IMR-90 (cell line): ENCODE measurements at regions of chr2 and their contacts with region 1.

Region 1: GRCh38 chr2:132400169-132400900 is 16.3 kb upstream of the GPR39 start:
- DNase-seq: peak; percentile 71
- ATAC-seq: peak; percentile 59
- H3K4me3 ChIP-seq: no peak overlapping the region
- H3K27ac ChIP-seq: no peak overlapping the region
- H3K4me1 ChIP-seq: no peaks in the 10 kb centered on the region
- H3K27me3 ChIP-seq: peaks cover 9% of the 10 kb centered on the region
- CTCF ChIP-seq: 0 out of 2 replicates have a peak, but pooled peaks have one; percentile 18
- POLR2A ChIP-seq: no peak
- RAD21 ChIP-seq: no peak

Region 2: DNA sequence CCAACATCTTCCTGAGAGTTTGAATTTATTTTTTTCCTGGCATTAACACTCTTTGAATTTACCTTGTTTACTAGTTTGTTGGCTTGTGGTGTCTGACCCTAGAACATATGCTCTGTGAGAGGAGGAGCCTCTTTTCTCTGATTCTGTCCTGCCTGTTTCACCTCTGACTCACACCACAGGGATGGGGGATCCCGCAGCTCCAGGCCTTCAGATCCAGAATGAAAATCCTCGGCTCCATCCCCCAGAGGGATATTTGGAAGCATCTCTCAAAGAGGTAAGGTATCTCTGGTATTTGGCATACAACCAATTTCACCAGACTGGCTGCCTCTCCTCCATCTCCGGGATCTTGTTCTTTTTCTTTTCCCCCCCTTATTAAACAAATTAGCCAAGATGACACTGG is 121.0 kb after region 1 on chr2:
- CTCF ChIA-PET with region 1: no interaction called
- POLR2A ChIA-PET with region 1: no interaction called
- dilution Hi-C with region 1: no loop called
- in situ Hi-C with region 1: no loop called
- intact Hi-C with region 1: no loop called
- DNase-seq: peak; percentile 28
- ATAC-seq: peak; percentile 56
- H3K4me3 ChIP-seq: no peak overlapping the region
- H3K27ac ChIP-seq: no peak overlapping the region
- H3K4me1 ChIP-seq: no peaks in the 10 kb centered on the region; the same call in 1 of the 2 replicates
- H3K27me3 ChIP-seq: peaks cover 1% of the 10 kb centered on the region; the same call in 1 of the 2 replicates
- CTCF ChIP-seq: no peak
- POLR2A ChIP-seq: no peak
- RAD21 ChIP-seq: no peak

Region 3: GRCh38 chr2:132623096-132623839 is 222.9 kb after region 1 on chr2:
- CTCF ChIA-PET with region 1: no interaction called
- POLR2A ChIA-PET with region 1: no interaction called
- dilution Hi-C with region 1: no loop called
- in situ Hi-C with region 1: no loop called
- intact Hi-C with region 1: no loop called
- DNase-seq: peak; percentile 79
- ATAC-seq: peak; percentile 68
- H3K4me3 ChIP-seq: no peak overlapping the region
- H3K27ac ChIP-seq: peak overlapping the region; percentile 75
- H3K4me1 ChIP-seq: peaks cover 8% of the 10 kb centered on the region; the same call in 1 of the 2 replicates
- H3K27me3 ChIP-seq: no peaks in the 10 kb centered on the region
- CTCF ChIP-seq: no peak
- POLR2A ChIP-seq: no peak
- RAD21 ChIP-seq: no peak

Region 4: DNA sequence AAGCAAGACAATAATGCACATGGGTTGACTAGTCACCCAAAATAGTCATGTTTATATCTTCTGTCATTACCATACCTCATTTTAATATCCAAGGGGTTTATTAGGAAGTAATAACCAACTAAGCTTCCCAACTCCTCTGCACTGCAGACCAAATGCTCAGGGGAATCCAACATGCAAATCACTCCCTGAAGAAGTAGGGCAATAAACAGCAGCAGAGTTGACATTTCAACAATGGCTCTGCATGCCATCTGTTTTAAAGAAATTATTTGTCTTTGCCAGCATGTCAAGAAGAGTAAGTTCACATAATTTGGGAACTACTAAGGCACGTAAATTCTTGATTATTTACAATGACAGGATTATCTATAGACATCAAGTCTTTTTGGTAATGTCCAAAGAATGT is 354.1 kb after region 1 on chr2:
- CTCF ChIA-PET with region 1: interaction called, 10 read pairs
- POLR2A ChIA-PET with region 1: no interaction called
- dilution Hi-C with region 1: no loop called
- in situ Hi-C with region 1: no loop called
- intact Hi-C with region 1: no loop called
- DNase-seq: no peak
- ATAC-seq: no peak
- H3K4me3 ChIP-seq: no peak overlapping the region
- H3K27ac ChIP-seq: no peak overlapping the region
- H3K4me1 ChIP-seq: peaks cover 7% of the 10 kb centered on the region
- H3K27me3 ChIP-seq: no peaks in the 10 kb centered on the region
- CTCF ChIP-seq: no peak
- POLR2A ChIP-seq: no peak
- RAD21 ChIP-seq: no peak